ENCODE measurements at regions of chr9 and their contacts with region 1.

Region 1: GRCh38 chr9:21789541-21790037 is 12.8 kb upstream of the MTAP start:
- H3K4me3 ChIP-seq: peak overlapping the region; percentile 19
- H3K27ac ChIP-seq: no peak overlapping the region
- H3K4me1 ChIP-seq: no peaks in the 10 kb centered on the region
- CTCF ChIP-seq: peak; percentile 67

Region 2: DNA sequence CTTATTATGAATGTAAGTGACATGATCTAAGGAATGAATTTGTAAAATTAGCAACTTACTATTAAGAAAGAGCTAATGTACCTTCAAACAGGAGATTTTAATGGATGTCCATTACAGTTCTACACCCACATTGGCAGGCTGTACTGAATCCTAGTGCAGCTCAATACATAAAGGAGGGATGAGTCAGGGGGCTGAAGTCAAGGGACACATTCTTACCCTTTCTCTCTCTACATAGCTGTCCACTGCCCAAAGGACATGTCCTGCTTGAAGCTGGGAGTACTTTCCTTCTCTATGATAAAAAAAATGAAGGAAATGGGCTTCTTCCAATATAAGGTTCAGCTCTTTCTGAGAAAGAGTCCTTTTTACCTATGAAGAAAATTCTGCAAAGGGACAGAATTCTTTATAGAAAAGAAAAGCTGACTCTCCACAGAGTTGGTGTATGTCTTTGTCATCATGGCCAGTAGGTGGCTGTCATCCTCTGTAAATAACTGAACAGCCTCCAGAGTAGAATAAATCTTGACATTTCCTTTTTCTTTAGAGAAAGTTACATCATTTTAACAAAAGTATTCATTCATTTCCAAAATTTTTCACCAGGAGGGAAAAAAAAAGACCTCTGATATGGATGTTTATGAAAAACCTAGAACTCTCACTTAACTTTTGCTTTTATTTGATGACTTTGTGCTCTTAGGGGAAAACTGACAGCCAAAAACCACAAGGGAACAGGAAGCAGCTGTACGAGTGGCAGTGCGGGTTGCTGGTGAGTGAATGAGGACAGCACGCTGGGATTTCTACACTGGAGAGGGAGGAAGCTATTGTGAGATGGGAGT is 536.7 kb before region 1 on chr9:
- CTCF ChIA-PET with region 1: interaction called, 10 read pairs
- POLR2A ChIA-PET with region 1: no interaction called
- H3K4me3 ChIP-seq: no peak overlapping the region
- H3K27ac ChIP-seq: no peak overlapping the region
- H3K4me1 ChIP-seq: no peaks in the 10 kb centered on the region
- CTCF ChIP-seq: no peak

Region 3: GRCh38 chr9:21326526-21327139 is 463.0 kb before region 1 on chr9:
- CTCF ChIA-PET with region 1: interaction called, 15 read pairs
- POLR2A ChIA-PET with region 1: no interaction called
- H3K4me3 ChIP-seq: no peak overlapping the region
- H3K27ac ChIP-seq: no peak overlapping the region
- H3K4me1 ChIP-seq: peaks cover 1% of the 10 kb centered on the region; the same call in 1 of the 2 replicates
- CTCF ChIP-seq: no peak

Region 4: DNA sequence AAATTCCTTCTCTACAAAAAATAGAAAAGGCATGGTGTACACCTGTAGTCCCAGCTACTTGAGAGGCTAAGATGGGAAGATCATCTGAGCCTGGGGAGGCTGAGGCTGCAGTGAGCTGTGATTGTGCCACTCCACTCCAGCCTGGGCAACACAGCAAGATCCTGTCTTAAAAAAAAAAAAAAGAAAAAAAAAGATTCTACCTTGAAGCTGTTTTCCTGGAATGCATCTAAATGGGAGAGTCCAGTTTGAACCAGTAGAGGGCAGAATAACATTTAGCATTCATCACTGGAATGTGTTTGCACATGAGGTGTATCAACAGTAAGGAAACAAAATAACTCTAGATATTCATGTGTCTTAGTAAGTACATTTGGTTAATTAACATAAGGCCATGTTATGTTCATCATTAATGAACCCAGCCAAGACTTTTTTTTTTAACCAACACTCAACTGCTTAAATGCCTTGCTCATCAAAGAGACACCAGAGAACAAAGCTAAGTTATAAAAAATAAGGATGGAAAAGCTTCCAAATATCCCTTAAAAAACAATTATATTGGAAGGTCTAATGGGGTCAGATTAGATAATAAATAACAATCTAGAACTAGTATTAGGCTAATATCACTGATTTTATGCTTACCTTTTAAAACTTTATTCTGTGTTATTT is 323.6 kb before region 1 on chr9:
- CTCF ChIA-PET with region 1: interaction called, 37 read pairs
- POLR2A ChIA-PET with region 1: no interaction called
- H3K4me3 ChIP-seq: no peak overlapping the region
- H3K27ac ChIP-seq: no peak overlapping the region
- H3K4me1 ChIP-seq: no peaks in the 10 kb centered on the region
- CTCF ChIP-seq: no peak

Region 5: GRCh38 chr9:21527579-21527978 is 262.0 kb before region 1 on chr9:
- CTCF ChIA-PET with region 1: no interaction called
- POLR2A ChIA-PET with region 1: no interaction called
- H3K4me3 ChIP-seq: no peak overlapping the region
- H3K27ac ChIP-seq: no peak overlapping the region
- H3K4me1 ChIP-seq: no peaks in the 10 kb centered on the region
- CTCF ChIP-seq: no peak

Region 6: DNA sequence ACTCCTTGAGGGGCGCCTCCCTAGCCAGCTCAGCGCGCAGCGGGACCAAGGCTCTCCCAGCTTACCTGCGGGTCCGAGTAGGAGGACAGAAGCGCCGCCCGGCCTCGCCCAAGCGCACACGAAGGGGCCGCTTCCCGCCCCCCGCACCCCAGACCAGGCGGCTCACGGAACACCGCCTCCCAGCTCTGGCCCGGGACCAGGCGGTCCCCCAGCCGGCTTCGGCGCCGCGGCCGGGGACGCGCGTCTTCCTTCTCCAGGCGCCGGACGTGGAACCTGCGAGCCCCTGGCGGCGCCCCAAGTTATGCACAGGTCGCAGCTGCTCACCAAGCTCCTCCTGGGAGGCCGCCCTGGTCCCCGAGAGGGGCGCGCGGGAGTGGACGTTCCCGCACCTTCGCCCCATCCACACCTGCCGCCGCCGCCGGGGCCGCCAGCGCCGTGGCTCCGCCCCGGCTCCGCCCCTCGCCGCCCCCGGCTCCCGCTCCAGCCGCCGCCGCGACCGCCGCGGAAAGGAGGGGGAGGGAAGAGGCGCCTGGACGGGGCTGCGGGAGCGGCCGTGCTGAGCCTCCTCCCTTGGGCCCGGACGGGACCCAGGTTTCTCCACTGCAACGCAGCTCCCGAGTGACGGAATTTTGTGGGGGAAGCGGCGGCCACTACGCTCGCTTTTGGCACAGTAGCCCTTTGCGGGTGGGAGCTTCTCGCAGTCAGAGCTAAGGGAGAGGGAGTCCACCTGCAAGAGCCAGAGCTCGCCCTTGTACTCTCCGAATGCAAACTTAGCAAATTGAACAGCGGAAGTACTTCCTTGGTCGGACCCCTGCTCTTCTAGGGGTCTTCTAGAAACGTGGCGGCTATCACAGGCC is 229.9 kb before region 1 on chr9:
- CTCF ChIA-PET with region 1: interaction called, 10 read pairs
- POLR2A ChIA-PET with region 1: no interaction called
- H3K4me3 ChIP-seq: peak overlapping the region; percentile 98
- H3K27ac ChIP-seq: peak overlapping the region; percentile 91
- H3K4me1 ChIP-seq: peaks cover 12% of the 10 kb centered on the region; the same call in 1 of the 2 replicates
- CTCF ChIP-seq: peak; percentile 36; the same call in 1 of the 2 replicates

Region 7: DNA sequence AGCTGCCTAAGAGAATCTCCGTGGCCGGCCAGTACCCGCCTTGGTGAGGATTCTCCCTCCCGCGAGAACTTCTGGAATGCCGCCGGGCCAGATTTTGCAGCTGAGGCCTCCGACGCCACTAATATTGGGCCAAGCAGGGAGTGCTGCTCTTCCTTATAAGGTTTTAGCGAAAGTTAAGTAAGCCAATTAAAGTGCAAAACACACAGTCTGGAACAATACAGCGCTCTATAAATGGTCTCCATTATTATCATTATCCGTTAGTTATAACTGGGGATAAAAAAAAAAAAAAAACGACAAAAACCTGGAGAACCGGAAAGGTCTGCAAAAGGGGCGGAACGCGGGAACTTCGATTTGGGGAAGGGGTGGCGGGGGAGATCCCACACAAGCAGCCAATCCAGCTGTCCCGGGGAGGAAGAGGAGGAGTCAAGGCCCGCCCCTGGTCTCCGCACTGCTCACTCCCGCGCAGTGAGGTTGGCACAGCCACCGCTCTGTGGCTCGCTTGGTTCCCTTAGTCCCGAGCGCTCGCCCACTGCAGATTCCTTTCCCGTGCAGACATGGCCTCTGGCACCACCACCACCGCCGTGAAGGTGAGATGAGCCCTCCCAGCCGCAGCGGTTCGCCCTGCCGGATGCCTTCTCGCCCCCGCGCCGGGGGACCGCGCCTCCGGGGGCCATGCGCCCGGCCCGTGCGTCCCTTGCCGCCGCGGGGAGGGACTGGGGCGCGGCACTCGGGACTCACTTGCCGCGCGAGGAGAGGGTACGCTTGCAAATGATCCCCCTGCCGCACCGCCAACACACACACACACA is 12.8 kb after region 1 on chr9 and contains the start of gene MTAP:
- CTCF ChIA-PET with region 1: no interaction called
- POLR2A ChIA-PET with region 1: no interaction called
- H3K4me3 ChIP-seq: peak within 1 kb of the TSS; percentile 82
- H3K27ac ChIP-seq: peak within 1 kb of the TSS; percentile 80
- H3K4me1 ChIP-seq: peaks cover 2% of the 10 kb centered on the region; the same call in 1 of the 2 replicates
- CTCF ChIP-seq: no peak

Region 8: GRCh38 chr9:21831961-21832509 is 42.4 kb after region 1 on chr9:
- CTCF ChIA-PET with region 1: no interaction called
- POLR2A ChIA-PET with region 1: no interaction called
- H3K4me3 ChIP-seq: no peak overlapping the region
- H3K27ac ChIP-seq: no peak overlapping the region
- H3K4me1 ChIP-seq: no peaks in the 10 kb centered on the region
- CTCF ChIP-seq: no peak

Region 9: DNA sequence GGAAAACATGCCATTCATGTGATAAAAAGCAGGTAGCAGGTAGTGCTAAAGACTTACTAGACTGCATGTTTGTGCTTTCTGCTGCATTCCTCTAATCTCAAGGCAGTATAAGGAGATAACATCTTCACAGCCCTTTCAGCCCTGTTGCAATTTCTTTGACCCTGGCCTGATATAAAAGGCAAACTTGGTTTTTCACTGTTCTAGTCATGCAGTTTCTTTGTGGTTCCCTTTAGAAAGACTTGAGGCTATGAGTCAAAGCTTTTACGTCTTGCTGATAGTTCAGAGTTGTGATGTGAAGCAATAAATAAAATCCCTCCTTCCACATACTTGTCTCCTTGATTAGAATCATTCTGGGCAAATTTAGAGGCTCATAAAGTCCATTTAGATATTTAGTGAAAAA is 308.1 kb after region 1 on chr9:
- CTCF ChIA-PET with region 1: no interaction called
- POLR2A ChIA-PET with region 1: no interaction called
- H3K4me3 ChIP-seq: no peak overlapping the region
- H3K27ac ChIP-seq: no peak overlapping the region
- H3K4me1 ChIP-seq: peaks cover 4% of the 10 kb centered on the region
- CTCF ChIP-seq: no peak